ENCODE measurements at regions of chr6 and their contacts with region 1.

Region 1: GRCh38 chr6:152301764-152302568 is 335.2 kb downstream of the SYNE1 start:
- DNase-seq: peak; percentile 71 to 94 (median 87)
- ATAC-seq: peak; percentile 97
- H3K4me3 ChIP-seq: peak overlapping the region; percentile 83 to 88
- H3K4me3 Mint-ChIP-seq: peak overlapping the region; percentile 100
- H3K27ac ChIP-seq: peak overlapping the region; percentile 82 to 85
- H3K27ac Mint-ChIP-seq: peak overlapping the region; percentile 100
- H3K4me1 ChIP-seq: peaks cover 21% of the 10 kb centered on the region
- H3K4me1 Mint-ChIP-seq: peaks cover 41% of the 10 kb centered on the region
- H3K27me3 ChIP-seq: no peaks in the 10 kb centered on the region
- H3K27me3 Mint-ChIP-seq: no peaks in the 10 kb centered on the region
- CTCF ChIP-seq: peak; percentile 77

Region 2: DNA sequence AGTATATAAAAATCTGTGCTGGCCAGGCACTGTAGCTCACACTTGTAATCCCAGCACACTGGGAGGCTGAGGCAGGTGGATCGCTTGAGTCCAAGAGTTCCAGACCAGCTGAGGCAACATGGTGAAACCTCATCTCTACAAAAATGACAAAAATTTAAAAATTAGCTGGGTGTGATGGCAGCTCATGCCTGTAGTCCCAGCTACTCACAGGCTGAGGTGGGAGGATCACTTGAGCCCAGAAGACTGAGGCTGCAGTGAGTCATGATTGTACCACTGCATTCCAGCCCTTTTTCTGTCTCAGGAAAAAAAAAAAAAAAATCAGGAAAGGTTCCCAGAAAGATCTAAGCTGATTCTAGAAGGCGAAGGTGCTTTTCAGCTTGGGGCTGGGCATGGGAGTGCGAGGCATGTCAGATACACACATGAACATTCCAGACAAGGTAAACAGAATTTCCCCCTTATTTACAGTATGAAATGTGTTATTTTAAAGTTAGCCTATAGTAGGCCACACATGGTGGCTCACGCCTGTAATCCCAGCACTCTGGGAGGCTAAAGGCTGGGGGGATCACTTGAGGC is 855.8 kb before region 1 on chr6:
- CTCF ChIA-PET with region 1: no interaction called
- POLR2A ChIA-PET with region 1: no interaction called
- intact Hi-C with region 1: loop called in 1 of 2 experiments (anchors 5 kb)
- DNase-seq: no peak
- ATAC-seq: no peak
- H3K4me3 ChIP-seq: no peak overlapping the region
- H3K4me3 Mint-ChIP-seq: no peak overlapping the region
- H3K27ac ChIP-seq: no peak overlapping the region
- H3K27ac Mint-ChIP-seq: no peak overlapping the region
- H3K4me1 ChIP-seq: peaks cover 9% of the 10 kb centered on the region
- H3K4me1 Mint-ChIP-seq: peaks cover 48% of the 10 kb centered on the region
- H3K27me3 ChIP-seq: no peaks in the 10 kb centered on the region
- H3K27me3 Mint-ChIP-seq: no peaks in the 10 kb centered on the region
- CTCF ChIP-seq: no peak

Region 3: DNA sequence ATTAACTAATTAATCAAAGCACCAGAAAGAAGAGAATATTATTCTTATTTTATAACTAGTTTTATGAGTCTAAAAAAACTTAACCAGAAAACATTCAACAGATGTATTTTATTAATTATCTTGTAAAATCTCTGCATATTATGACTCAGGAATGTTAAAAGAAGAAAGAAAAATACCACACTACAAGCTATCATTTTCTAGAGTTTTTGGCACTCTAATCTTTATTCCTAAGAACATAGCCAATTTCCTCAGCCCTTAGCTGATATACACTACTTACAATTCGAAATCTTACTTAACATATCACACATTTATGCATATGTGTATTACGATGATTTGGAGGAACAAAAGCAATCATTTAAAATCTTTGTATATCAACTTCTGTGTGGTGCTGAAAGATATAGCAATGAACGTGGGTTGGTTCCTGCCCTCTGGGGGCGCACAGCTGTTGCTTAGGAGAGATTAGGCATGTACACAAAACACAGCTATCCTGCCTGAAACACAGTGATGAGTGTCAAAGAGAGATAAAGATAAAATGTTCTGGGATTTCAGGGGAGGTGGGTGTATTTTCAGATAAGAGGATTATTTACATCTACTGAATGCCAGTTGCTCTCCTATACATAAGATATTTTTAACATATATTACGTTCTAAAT is 69.3 kb before region 1 on chr6:
- CTCF ChIA-PET with region 1: no interaction called
- POLR2A ChIA-PET with region 1: no interaction called
- intact Hi-C with region 1: loop called in 1 of 2 experiments (anchors 5 kb)
- DNase-seq: peak in 1 of 9 experiments; percentile 12
- ATAC-seq: peak; percentile 27
- H3K4me3 ChIP-seq: no peak overlapping the region
- H3K4me3 Mint-ChIP-seq: peak overlapping the region; percentile 66
- H3K27ac ChIP-seq: no peak overlapping the region
- H3K27ac Mint-ChIP-seq: peak overlapping the region; percentile 77
- H3K4me1 ChIP-seq: peaks cover 18% of the 10 kb centered on the region
- H3K4me1 Mint-ChIP-seq: peaks cover 24% of the 10 kb centered on the region
- H3K27me3 ChIP-seq: no peaks in the 10 kb centered on the region
- H3K27me3 Mint-ChIP-seq: no peaks in the 10 kb centered on the region
- CTCF ChIP-seq: no peak

Measured in CD8-positive, alpha-beta T cell (primary cell).